CD14-positive monocyte (primary cell): ENCODE measurements at regions of chr2 and their contacts with region 1.

Region 1: DNA sequence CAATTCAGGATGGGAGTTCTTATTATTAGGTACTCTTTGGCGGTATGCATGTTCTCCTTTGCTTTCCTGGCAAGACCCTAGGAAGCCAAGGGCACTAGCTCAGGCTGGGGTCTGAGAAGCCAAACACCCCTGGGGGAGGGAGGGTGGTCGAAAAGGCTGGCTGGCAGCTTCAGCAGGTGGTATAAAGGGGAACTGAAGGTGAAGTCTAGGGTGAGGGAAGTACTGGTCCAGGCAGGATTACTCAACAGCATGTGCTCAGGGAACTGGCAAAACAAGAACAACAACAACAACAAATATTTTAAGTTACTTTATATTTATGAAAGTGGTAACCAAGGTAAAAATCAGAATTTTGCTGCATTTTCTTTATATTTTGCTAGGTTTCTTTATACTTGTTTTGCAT is 40.7 kb upstream of the PCBP1 start:
- DNase-seq: peak; percentile 60 to 88 (median 76)
- H3K4me3 ChIP-seq: peak overlapping the region in 1 of 3 experiments; percentile 17
- H3K4me3 Mint-ChIP-seq: no peak overlapping the region
- H3K27ac ChIP-seq: peak overlapping the region; percentile 65 to 98
- H3K27ac Mint-ChIP-seq: peak overlapping the region; percentile 93 to 99 (median 96)
- H3K4me1 ChIP-seq: peaks cover 72 to 77% of the 10 kb centered on the region in 2 donors
- H3K4me1 Mint-ChIP-seq: peaks cover 71% of the 10 kb centered on the region
- H3K27me3 ChIP-seq: no peaks in the 10 kb centered on the region
- H3K27me3 Mint-ChIP-seq: no peaks in the 10 kb centered on the region
- CTCF ChIP-seq: no peak

Region 2: DNA sequence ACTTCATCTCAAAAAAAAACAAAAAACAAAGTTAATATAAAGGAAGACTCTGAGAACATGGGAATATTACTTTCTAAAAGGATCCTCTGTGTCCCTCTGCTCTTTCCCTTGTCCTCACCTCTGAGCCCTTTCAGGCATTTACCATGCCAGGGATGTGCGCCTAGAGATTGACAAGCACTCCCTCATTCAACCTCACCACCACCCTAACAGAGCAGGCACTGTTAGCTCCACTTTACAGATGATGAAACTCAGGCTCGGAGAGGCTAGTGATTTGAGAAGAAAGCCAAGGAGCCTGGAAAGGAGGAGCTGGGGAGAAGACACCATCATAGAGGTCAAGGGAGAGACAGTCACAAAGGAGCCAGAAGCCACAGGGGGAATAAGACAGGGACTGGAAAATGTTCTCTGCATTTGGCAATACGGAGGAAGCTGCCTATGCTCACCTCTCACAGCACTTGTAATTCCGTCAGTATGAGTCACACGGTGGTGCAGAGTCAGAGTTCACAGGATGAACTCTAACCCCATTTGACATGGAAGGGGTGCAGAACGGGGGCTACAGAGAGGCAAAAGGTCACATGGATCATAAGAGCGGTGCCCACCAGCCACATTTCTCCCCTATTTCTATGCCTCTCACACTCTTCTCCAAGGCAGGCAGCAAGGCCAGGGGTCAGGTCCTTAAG is 507.5 kb before region 1 on chr2:
- intact Hi-C with region 1: no loop called
- DNase-seq: peak in 1 of 3 donors; percentile 24
- H3K4me3 ChIP-seq: no peak overlapping the region
- H3K4me3 Mint-ChIP-seq: no peak overlapping the region
- H3K27ac ChIP-seq: peak overlapping the region in 1 of 2 donors; percentile 38
- H3K27ac Mint-ChIP-seq: peak overlapping the region in 5 of 7 donors; percentile 3 to 69 (median 67)
- H3K4me1 ChIP-seq: peaks cover 27 to 30% of the 10 kb centered on the region in 2 donors
- H3K4me1 Mint-ChIP-seq: peaks cover 41% of the 10 kb centered on the region
- H3K27me3 ChIP-seq: no peaks in the 10 kb centered on the region
- H3K27me3 Mint-ChIP-seq: peaks cover 0 to 2% (median 0%) of the 10 kb centered on the region in 3 donors
- CTCF ChIP-seq: no peak

Region 3: DNA sequence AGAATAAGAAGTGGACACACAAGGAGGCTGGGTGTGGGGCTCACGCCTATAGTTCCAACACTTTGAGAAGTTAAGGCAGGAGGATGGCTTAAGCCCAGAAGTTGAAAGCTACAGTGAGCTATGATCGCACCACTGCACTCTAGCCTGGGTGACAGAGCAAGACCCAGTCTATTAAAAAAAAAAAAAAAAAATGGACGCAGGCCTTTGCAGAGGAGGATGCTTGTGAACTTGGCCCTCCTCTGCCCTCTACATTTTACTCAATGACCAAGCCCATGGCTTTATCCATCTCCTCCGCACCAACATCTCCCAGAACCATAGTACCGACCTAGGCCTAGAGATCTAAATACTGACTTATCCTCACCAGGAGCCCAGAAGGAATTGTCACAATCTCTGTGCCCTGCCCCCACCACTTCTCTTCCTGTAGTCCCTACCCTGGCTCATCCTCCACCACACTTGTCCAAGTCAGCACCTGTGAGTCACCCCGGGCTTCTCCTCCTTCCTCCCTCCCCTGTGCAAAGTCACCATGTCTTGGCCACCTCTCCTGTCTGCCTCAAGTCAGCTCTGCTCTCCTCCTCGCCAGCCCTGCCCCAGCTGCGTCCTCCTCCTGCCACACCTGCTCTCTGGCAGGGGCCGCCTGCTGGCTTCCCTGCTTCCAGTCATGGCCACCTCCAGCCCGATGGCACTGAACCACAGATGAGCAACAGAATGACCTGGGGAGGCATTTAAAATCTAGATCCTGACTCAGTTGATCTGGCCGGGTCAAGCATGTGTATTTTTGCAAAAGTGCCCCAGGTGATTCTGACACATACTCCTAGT is 49.3 kb before region 1 on chr2:
- intact Hi-C with region 1: loop called in 1 of 2 experiments (anchors 10 kb)
- DNase-seq: peak; percentile 84 to 93 (median 91)
- H3K4me3 ChIP-seq: no peak overlapping the region
- H3K4me3 Mint-ChIP-seq: peak overlapping the region in 1 of 2 donors; percentile 39
- H3K27ac ChIP-seq: peak overlapping the region in 1 of 2 donors; percentile 34
- H3K27ac Mint-ChIP-seq: peak overlapping the region; percentile 65 to 83 (median 76)
- H3K4me1 ChIP-seq: peaks cover 11 to 14% of the 10 kb centered on the region in 2 donors
- H3K4me1 Mint-ChIP-seq: peaks cover 18% of the 10 kb centered on the region
- H3K27me3 ChIP-seq: no peaks in the 10 kb centered on the region
- H3K27me3 Mint-ChIP-seq: peaks cover 0 to 4% (median 3%) of the 10 kb centered on the region in 3 donors
- CTCF ChIP-seq: no peak

Region 4: GRCh38 chr2:70029814-70030409 is 16.6 kb before region 1 on chr2:
- intact Hi-C with region 1: loop called in 1 of 2 experiments (anchors 2 kb)
- DNase-seq: peak; percentile 87 to 96 (median 94)
- H3K4me3 ChIP-seq: peak overlapping the region in 1 of 3 experiments; percentile 2
- H3K4me3 Mint-ChIP-seq: no peak overlapping the region
- H3K27ac ChIP-seq: peak overlapping the region; percentile 81 to 95
- H3K27ac Mint-ChIP-seq: peak overlapping the region; percentile 95 to 98 (median 97)
- H3K4me1 ChIP-seq: peaks cover 25 to 30% of the 10 kb centered on the region in 2 donors
- H3K4me1 Mint-ChIP-seq: peaks cover 34% of the 10 kb centered on the region
- H3K27me3 ChIP-seq: no peaks in the 10 kb centered on the region
- H3K27me3 Mint-ChIP-seq: peaks cover 0 to 4% (median 1%) of the 10 kb centered on the region in 3 donors
- CTCF ChIP-seq: no peak